ENCODE measurements at regions of chr3 and their contacts with region 1.

Region 1: DNA sequence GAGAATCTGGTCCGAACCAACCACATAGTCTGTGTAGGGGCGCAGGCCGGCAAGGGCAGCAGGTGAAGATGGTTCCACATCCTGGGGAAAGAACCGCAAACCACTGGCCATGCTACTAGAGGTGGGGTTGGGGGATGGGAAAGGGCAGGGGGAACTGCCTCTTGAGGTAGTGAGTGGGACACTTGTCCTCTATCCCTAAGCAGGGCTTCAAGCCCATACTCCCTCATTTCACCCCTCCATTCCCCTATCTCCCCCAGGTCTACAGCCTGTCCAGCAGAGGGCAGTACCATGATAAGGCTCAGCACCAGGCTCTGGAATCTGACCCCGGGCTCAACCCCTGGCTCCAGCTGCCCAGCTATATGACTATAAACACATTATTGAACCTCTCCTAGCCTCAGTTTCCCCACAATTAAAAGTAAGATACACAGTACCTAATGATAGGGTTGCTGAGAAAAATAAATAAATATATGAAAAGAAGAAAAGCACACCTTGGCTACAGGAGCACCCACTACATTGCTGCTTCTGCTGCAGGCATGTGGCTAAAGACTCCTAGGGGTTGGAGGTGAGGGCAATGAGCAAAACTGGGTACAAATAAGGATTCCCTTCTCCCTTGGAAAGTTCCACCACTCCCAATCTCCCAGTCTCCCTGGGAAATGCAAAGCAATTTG is 6.3 kb downstream of the GORASP1 start:
- DNase-seq: peak; percentile 45 to 53 (median 48)
- ATAC-seq: peak; percentile 43
- H3K4me3 ChIP-seq: no peak overlapping the region
- H3K27ac ChIP-seq: peak overlapping the region in 1 of 4 donors; percentile 7
- H3K4me1 ChIP-seq: peaks cover 61% of the 10 kb centered on the region
- H3K27me3 ChIP-seq: no peaks in the 10 kb centered on the region
- CTCF ChIP-seq: peak; percentile 36 to 73 (median 57)
- POLR2A ChIP-seq: no peak

Region 2: DNA sequence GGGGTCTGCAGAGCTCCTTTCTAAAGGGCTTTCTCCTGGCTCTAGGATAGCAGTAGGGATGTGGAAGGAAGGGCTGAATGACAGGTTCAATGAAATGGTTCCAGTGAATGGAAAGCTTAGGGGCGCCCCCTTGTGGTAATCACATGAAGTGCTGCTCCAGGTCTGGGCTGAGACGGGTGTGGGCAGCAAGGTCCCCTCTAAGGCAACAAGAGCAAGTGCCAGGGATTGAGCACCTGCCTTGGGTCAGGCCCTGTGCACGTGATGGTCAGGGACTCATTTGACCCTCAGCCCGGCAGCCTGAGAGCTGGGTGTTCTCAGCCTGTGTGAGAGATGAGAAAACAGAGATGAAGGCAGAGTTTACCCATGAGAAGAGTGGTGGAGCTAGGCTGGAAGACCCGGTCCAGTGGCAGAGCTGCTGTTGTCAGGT is 190.8 kb after region 1 on chr3:
- intact Hi-C with region 1: loop called (anchors 5 kb)
- DNase-seq: peak; percentile 57 to 73 (median 70)
- ATAC-seq: peak; percentile 50
- H3K4me3 ChIP-seq: no peak overlapping the region
- H3K27ac ChIP-seq: no peak overlapping the region
- H3K4me1 ChIP-seq: peaks cover 25% of the 10 kb centered on the region
- H3K27me3 ChIP-seq: no peaks in the 10 kb centered on the region
- CTCF ChIP-seq: peak; percentile 71 to 92 (median 81)
- POLR2A ChIP-seq: no peak